Left colon (tissue), 2 donors: ENCODE measurements at regions of chr3 and their contacts with region 1.

Region 1: GRCh38 chr3:193464889-193465288 is 86.3 kb upstream of the ATP13A5 start:
- DNase-seq: no peak
- ATAC-seq: no peak

Region 2: GRCh38 chr3:191557322-191557721 is 1907.6 kb before region 1 on chr3:
- intact Hi-C with region 1: no loop called
- DNase-seq: no peak
- ATAC-seq: no peak

Region 3: DNA sequence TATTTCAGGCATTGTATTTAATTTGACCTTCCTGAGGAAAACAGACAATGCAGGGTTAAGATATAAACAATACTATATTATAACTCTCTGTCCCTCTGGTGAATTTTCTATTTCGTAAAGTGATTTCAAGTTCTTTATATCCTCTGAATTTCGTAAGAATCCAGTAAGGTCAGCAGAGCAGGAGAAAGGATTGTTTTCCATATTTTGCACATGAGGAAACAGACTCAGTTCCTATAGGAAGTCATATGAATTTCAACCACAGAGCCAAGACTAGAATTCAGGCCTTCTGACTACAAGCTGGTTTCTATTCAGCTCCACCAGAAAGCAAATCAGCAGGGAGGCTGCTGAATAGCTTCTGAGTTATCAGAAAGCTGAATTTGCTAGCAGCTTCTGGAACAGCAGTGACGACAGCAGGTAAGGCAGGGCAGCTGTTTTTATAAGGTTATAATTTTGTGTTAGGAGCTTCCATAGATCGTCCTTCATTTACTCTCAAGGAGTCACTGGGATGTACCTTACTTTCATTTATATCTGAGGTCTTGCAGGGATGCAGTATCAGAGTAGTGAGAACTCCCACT is 235.0 kb before region 1 on chr3:
- intact Hi-C with region 1: no loop called
- DNase-seq: no peak
- ATAC-seq: no peak

Region 4: GRCh38 chr3:193240850-193241706 is 223.8 kb before region 1 on chr3 and contains the start of gene PLAAT1:
- intact Hi-C with region 1: no loop called
- DNase-seq: peak; percentile 54 to 71
- ATAC-seq: peak; percentile 97
- total RNA-seq, gene PLAAT1: not detected

Region 5: DNA sequence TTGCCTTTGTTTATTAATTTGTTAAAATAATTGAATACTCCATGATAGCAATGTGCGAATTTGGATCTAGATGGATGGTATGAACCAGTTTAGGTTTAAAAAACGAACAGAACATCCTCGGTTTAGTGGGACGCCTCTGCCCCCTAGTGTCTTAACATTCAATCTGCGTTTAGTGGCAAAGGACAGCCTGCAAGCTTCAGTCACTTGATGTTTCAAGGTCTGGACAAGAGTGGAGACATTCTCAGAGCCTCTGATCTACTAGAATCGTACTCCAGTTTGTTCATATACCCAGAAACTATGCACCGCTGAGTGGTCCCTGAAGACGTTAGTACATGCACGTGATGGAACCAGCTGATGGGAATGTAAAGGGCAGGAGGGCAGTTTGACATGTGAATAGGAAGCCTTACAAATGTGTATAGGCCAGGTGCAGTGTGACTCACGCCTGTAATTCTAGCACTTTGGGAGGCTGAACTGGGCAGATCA is 107.6 kb after region 1 on chr3:
- intact Hi-C with region 1: loop called in 1 of 2 experiments (anchors 5 kb)
- DNase-seq: peak in 1 of 2 donors; percentile 42
- ATAC-seq: peak; percentile 86